PC-3 (cell line): ENCODE measurements at regions of chr21 and their contacts with region 1.

Region 1: DNA sequence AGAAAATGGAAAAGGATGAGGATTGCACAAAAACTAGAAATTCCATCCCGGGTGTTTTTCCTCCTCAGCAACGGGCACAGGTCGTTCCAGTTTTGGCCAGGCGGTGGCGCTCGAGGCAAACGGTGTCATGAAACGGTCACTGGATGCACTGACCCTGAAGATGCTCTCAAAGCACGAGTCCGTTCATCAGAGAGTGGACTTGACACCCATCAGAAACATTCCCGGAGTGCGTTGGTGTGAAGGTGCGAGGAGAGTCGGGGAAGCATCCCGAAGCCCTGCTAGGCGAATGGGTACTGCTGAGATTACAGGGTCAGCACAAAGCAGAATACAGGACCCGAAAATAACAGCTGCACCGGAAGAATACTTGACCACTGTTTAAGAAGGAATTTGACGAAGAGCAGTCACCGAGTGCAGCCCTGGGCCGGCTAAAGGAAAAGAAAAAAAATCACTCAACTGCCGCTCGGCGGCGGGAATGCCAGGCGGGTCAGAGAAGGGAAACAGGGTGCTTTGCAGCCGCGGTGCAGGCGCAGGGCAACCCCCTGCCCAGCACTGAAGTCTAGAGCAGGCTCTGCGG is 71.7 kb upstream of the ETS2 start:
- DNase-seq: peak; percentile 84
- ATAC-seq: peak; percentile 90
- H3K4me3 ChIP-seq: no peak overlapping the region
- H3K27ac ChIP-seq: 0 out of 2 replicates have a peak overlapping the region, but pooled peaks have one; percentile 7
- H3K4me1 ChIP-seq: peaks cover 6% of the 10 kb centered on the region; the same call in 1 of the 2 replicates
- H3K27me3 ChIP-seq: no peaks in the 10 kb centered on the region
- CTCF ChIP-seq: peak; percentile 97

Region 2: DNA sequence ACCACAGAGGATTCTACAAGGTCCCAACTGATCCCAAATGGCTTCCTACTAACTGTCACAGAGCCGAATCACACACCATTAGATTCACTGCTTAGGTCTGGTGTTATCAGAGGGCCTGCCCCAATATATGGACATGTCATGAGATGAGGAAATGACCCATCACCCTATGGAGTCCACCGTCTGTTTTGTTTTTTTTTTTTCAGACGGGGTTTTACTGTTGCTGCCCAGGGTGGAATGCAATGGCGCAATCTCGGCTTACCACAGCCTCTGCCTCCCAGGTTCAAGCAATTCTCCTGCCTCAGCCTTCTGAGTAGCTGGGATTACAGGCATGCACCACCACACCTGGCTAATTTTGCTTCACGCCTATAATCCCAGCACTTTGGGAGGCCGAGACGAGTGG is 12.1 kb before region 1 on chr21:
- CTCF ChIA-PET with region 1: no interaction called
- POLR2A ChIA-PET with region 1: interaction called, 22 read pairs
- intact Hi-C with region 1: no loop called
- DNase-seq: no peak
- ATAC-seq: no peak
- H3K4me3 ChIP-seq: no peak overlapping the region
- H3K27ac ChIP-seq: no peak overlapping the region
- H3K4me1 ChIP-seq: no peaks in the 10 kb centered on the region
- H3K27me3 ChIP-seq: no peaks in the 10 kb centered on the region
- CTCF ChIP-seq: no peak

Region 3: DNA sequence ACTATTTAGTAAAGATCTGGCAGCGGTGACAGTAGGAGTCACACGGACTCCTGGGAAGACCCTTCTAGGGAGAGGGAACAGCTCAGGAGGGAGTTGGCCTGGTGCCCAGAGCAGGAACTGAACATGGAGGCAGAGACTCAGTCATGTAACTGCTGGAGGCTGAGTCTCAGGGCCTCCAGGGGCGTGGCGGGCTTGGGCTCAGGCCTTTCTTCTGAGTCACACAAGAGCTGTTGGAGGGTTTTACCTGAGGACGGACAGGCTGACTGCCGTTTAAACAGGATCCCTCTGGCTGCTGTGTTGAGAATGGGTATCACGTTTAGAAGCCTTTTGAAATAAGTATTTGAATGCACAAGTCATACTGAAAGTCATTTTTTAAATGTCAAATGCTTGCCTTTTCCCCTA is 64.4 kb after region 1 on chr21:
- CTCF ChIA-PET with region 1: no interaction called
- POLR2A ChIA-PET with region 1: no interaction called
- intact Hi-C with region 1: loop called (anchors 1 kb)
- DNase-seq: peak; percentile 96
- ATAC-seq: peak; percentile 51
- H3K4me3 ChIP-seq: no peak overlapping the region
- H3K27ac ChIP-seq: peak overlapping the region; percentile 95
- H3K4me1 ChIP-seq: peaks cover 81% of the 10 kb centered on the region
- H3K27me3 ChIP-seq: no peaks in the 10 kb centered on the region
- CTCF ChIP-seq: no peak

Region 4: GRCh38 chr21:38925923-38926322 is 191.9 kb after region 1 on chr21:
- CTCF ChIA-PET with region 1: no interaction called
- POLR2A ChIA-PET with region 1: no interaction called
- intact Hi-C with region 1: loop called (anchors 10 kb)
- DNase-seq: peak; percentile 87
- ATAC-seq: peak; percentile 85
- H3K4me3 ChIP-seq: peak overlapping the region; percentile 58
- H3K27ac ChIP-seq: 0 out of 2 replicates have a peak overlapping the region, but pooled peaks have one; percentile 12
- H3K4me1 ChIP-seq: peaks cover 27% of the 10 kb centered on the region
- H3K27me3 ChIP-seq: no peaks in the 10 kb centered on the region
- CTCF ChIP-seq: no peak

Region 5: GRCh38 chr21:39118604-39119215 is 384.6 kb after region 1 on chr21:
- CTCF ChIA-PET with region 1: no interaction called
- POLR2A ChIA-PET with region 1: interaction called, 10 read pairs
- intact Hi-C with region 1: no loop called
- DNase-seq: no peak
- ATAC-seq: no peak
- H3K4me3 ChIP-seq: no peak overlapping the region
- H3K27ac ChIP-seq: no peak overlapping the region
- H3K4me1 ChIP-seq: peaks cover 21% of the 10 kb centered on the region
- H3K27me3 ChIP-seq: no peaks in the 10 kb centered on the region
- CTCF ChIP-seq: no peak